Panc1 (cell line): ENCODE measurements at regions of chr17 and their contacts with region 1.

Region 1: GRCh38 chr17:38735161-38735997 is 5.2 kb downstream of the CISD3 start:
- DNase-seq: no peak
- ATAC-seq: peak; percentile 31
- H3K4me3 ChIP-seq: no peak overlapping the region
- H3K27ac ChIP-seq: peak overlapping the region; percentile 51; the same call in 1 of the 2 replicates
- H3K4me1 ChIP-seq: peaks cover 35% of the 10 kb centered on the region
- H3K27me3 ChIP-seq: no peaks in the 10 kb centered on the region
- CTCF ChIP-seq: peak; percentile 85

Region 2: DNA sequence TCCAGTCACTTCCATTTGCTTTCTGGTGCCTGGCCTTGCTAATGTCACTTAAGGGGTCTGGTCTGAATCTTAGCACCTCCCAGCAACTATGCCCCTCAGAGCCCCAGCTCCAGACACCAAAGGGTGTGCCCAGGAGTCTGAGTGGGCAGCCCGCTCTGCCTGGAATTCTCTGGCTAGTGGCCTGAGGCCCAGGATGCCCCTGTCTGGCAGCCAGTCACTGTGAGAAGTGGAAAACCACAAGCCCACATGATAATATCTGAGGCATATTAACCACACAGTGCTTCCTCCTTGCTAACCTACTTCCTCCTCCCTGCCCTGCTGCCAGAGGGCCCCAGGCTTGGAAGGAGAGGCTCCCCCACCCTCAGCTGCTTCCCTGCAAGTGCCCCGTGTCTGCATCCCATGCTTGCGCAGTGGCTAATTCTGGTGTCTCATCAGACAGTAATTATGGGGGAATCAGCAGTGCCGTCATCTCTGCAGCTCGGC is 143.6 kb before region 1 on chr17:
- CTCF ChIA-PET with region 1: no interaction called
- POLR2A ChIA-PET with region 1: no interaction called
- in situ Hi-C with region 1: no loop called
- intact Hi-C with region 1: no loop called
- DNase-seq: no peak
- ATAC-seq: peak; percentile 78
- H3K4me3 ChIP-seq: no peak overlapping the region
- H3K27ac ChIP-seq: peak overlapping the region; percentile 17; the same call in 1 of the 2 replicates
- H3K4me1 ChIP-seq: peaks cover 16% of the 10 kb centered on the region
- H3K27me3 ChIP-seq: no peaks in the 10 kb centered on the region
- CTCF ChIP-seq: no peak

Region 3: DNA sequence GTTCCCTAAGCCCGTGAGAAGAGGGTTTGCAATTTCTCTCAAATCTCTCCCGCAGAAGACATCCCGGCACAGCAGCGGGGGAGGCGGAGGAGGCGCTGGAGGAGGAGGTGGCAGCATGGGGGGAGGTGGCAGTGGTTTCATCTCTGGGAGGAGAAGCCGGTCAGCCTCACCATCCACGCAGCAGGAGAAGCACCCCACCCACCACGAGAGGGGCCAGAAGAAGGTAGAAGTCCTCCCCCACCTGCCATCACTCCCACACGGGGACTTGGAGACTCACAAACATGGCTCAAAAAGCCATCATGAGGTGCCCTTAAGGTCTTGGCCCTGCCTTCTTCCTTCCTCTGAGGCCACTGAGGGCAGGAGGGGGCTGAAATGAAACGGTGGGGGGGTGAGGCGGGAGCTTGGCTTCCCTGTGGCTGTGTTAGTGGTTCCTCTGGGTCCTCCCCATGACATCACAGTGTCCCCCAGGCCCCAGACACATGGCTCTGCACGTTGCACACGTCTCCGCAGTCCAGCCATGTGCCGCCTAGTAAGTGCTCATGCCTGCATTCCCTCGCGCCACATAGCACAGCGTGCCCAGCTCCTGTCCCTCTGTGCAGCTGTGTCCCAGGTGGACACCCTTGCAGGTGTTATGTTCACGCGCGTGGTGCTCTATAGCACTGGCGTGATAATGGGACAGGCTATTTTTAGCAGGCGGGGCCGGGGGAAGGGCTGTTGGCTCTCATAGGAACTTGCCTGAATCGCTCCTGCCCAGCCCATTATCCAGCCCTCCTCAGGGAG is 23.4 kb before region 1 on chr17:
- CTCF ChIA-PET with region 1: no interaction called
- POLR2A ChIA-PET with region 1: no interaction called
- in situ Hi-C with region 1: no loop called
- intact Hi-C with region 1: no loop called
- DNase-seq: no peak
- ATAC-seq: no peak
- H3K4me3 ChIP-seq: no peak overlapping the region
- H3K27ac ChIP-seq: no peak overlapping the region
- H3K4me1 ChIP-seq: no peaks in the 10 kb centered on the region
- H3K27me3 ChIP-seq: no peaks in the 10 kb centered on the region
- CTCF ChIP-seq: no peak

Region 4: DNA sequence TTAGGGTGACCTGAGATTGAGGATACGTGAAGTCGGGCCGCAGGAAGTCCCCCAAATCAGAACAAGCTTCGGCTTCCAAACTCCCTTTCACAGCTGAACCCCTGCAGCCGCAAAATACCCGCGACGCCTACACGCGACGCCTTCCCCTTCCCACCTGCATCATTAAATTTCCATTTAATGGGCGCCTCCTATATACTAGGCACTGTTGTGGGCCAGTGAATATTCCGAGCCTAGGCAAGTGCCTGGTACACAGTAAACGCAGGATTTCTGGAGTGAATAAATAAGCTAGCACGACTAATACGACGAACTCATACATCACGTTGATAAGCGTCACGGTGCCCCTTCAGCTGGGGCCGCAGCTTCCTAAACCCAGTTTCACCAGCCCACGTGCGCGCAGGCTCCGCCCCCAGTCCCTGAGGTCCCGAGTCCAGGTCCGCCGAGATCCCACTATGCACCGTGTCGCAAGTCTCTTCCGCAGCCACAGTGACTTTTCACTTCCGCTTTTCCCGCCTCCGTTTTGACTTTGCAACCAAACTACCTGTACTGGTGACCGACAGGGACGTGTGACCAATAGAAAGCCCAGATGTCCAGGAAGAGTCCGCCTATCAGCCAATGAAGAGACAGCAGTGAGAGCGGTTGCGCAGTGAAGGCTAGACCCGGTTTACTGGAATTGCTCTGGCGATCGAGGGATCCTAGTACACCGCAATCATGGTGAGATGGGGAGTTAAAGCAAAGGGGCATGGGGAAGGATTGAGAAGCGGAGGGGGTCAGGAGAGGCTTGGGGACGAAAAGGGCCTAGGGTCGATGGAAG is 16.9 kb after region 1 on chr17 and contains the start of gene PSMB3:
- CTCF ChIA-PET with region 1: interaction called, 17 read pairs
- POLR2A ChIA-PET with region 1: interaction called, 5 read pairs
- in situ Hi-C with region 1: no loop called
- intact Hi-C with region 1: no loop called
- DNase-seq: peak; percentile 91
- ATAC-seq: peak; percentile 81
- H3K4me3 ChIP-seq: peak within 1 kb of the TSS; percentile 76 to 90
- H3K27ac ChIP-seq: peak within 1 kb of the TSS; percentile 96
- H3K4me1 ChIP-seq: no peaks in the 10 kb centered on the region
- H3K27me3 ChIP-seq: no peaks in the 10 kb centered on the region
- CTCF ChIP-seq: no peak
- total RNA-seq, gene PSMB3: 233 TPM

Region 5: GRCh38 chr17:38848557-38848891 is 113.1 kb after region 1 on chr17:
- CTCF ChIA-PET with region 1: no interaction called
- POLR2A ChIA-PET with region 1: interaction called, 11 read pairs
- in situ Hi-C with region 1: no loop called
- intact Hi-C with region 1: no loop called
- DNase-seq: no peak
- ATAC-seq: no peak
- H3K4me3 ChIP-seq: no peak overlapping the region
- H3K27ac ChIP-seq: no peak overlapping the region
- H3K4me1 ChIP-seq: peaks cover 12% of the 10 kb centered on the region
- H3K27me3 ChIP-seq: no peaks in the 10 kb centered on the region
- CTCF ChIP-seq: no peak